MCF 10A (cell line): ENCODE measurements at regions of chr19 and their contacts with region 1.

Region 1: GRCh38 chr19:16659831-16660708 is at the start of gene SMIM7:
- DNase-seq: peak; percentile 99
- H3K4me3 Mint-ChIP-seq: peak within 1 kb of the TSS; percentile 95
- H3K27ac Mint-ChIP-seq: peak within 1 kb of the TSS; percentile 94
- H3K4me1 Mint-ChIP-seq: peaks cover 7% of the 10 kb centered on the region
- H3K27me3 Mint-ChIP-seq: no peaks in the 10 kb centered on the region
- CTCF ChIP-seq: no peak
- total RNA-seq, gene SMIM7: 69.3 and 81.8 TPM in 2 replicates

Region 2: GRCh38 chr19:16649734-16650133 is 10.3 kb before region 1 on chr19:
- CTCF ChIA-PET with region 1: no interaction called
- POLR2A ChIA-PET with region 1: interaction called, 13 read pairs
- intact Hi-C with region 1: no loop called
- DNase-seq: no peak
- H3K4me3 Mint-ChIP-seq: no peak overlapping the region
- H3K27ac Mint-ChIP-seq: no peak overlapping the region
- H3K4me1 Mint-ChIP-seq: no peaks in the 10 kb centered on the region
- H3K27me3 Mint-ChIP-seq: no peaks in the 10 kb centered on the region
- CTCF ChIP-seq: no peak

Region 3: DNA sequence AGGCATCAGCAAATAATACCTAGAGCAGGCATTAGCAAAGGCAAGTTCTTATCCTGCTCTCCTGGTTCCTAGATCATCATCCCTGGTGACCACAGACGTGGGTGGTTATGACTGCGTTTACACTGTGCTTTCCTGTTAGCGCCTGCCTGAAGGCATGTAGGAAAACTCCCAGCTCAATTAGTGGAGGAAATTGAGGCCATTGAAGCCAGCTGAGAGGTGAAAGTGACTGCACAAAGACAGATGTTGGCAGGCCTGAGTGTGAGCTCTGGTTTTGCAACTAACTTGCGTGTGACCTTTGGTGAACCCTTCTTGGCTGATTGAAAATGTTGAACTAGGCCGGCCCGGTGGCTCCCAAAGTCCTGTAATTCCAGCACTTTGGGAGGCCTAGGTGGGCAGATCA is 42.0 kb after region 1 on chr19:
- CTCF ChIA-PET with region 1: interaction called, 4 read pairs
- POLR2A ChIA-PET with region 1: interaction called, 11 read pairs
- intact Hi-C with region 1: no loop called
- DNase-seq: peak; percentile 93
- H3K4me3 Mint-ChIP-seq: no peak overlapping the region
- H3K27ac Mint-ChIP-seq: no peak overlapping the region
- H3K4me1 Mint-ChIP-seq: peaks cover 10% of the 10 kb centered on the region
- H3K27me3 Mint-ChIP-seq: no peaks in the 10 kb centered on the region
- CTCF ChIP-seq: no peak

Region 4: GRCh38 chr19:16721051-16721450 is 61.0 kb after region 1 on chr19:
- CTCF ChIA-PET with region 1: interaction called, 4 read pairs
- POLR2A ChIA-PET with region 1: interaction called, 26 read pairs
- intact Hi-C with region 1: no loop called
- DNase-seq: no peak
- H3K4me3 Mint-ChIP-seq: no peak overlapping the region
- H3K27ac Mint-ChIP-seq: no peak overlapping the region
- H3K4me1 Mint-ChIP-seq: peaks cover 18% of the 10 kb centered on the region
- H3K27me3 Mint-ChIP-seq: no peaks in the 10 kb centered on the region
- CTCF ChIP-seq: no peak

Region 5: GRCh38 chr19:16860118-16860517 is 200.0 kb after region 1 on chr19:
- CTCF ChIA-PET with region 1: no interaction called
- POLR2A ChIA-PET with region 1: no interaction called
- intact Hi-C with region 1: no loop called
- DNase-seq: no peak
- H3K4me3 Mint-ChIP-seq: no peak overlapping the region
- H3K27ac Mint-ChIP-seq: no peak overlapping the region
- H3K4me1 Mint-ChIP-seq: no peaks in the 10 kb centered on the region
- H3K27me3 Mint-ChIP-seq: no peaks in the 10 kb centered on the region
- CTCF ChIP-seq: no peak